Heart left ventricle (tissue), 16 donors: ENCODE measurements at regions of chr4 and their contacts with region 1.

Region 1: DNA sequence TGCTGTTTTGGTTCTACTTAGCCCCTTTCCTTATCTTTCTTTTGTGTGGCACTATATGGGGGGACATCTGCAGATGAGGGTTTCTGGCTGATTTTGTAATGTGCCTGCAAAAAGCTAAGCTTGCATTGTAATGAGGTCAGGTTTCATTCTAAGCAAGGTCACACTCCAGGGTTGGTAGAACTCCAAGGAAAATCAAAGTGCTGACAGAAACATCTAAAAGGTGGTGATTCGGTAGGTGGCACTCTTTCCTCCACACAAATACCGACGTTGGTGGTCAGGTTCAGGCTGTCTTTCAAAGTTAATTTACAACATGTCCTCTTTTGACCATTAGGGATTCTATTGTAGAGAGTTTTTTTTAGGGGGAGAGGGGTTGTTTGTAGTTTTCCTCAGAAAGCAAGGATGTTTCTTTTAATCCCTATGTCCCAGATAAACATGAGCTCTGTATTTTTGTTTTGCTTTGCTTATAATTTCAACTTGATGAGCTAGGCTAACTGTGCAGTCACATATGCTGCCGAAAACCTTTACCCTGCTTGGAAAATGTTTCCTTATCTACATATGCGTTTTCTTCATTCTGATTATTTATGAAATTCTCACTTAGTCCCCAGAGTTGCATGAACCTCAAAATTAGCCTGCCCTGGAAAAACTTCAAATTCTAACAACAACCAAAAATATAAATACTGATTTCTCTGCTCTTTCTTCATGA is 434.2 kb downstream of the PPARGC1A start:
- DNase-seq: peak in 3 of 5 donors; percentile 19 to 33 (median 32)
- ATAC-seq: peak; percentile 85 to 90 (median 88)
- H3K4me3 ChIP-seq: no peak overlapping the region
- H3K27ac ChIP-seq: peak overlapping the region in 6 of 12 donors; percentile 28 to 54 (median 44)
- H3K4me1 ChIP-seq: peaks cover 0 to 29% (median 1%) of the 10 kb centered on the region in 12 donors
- H3K27me3 ChIP-seq: no peaks in the 10 kb centered on the region
- CTCF ChIP-seq: peak in 6 of 12 donors; percentile 10 to 40 (median 30)
- POLR2A ChIP-seq: no peak

Region 2: DNA sequence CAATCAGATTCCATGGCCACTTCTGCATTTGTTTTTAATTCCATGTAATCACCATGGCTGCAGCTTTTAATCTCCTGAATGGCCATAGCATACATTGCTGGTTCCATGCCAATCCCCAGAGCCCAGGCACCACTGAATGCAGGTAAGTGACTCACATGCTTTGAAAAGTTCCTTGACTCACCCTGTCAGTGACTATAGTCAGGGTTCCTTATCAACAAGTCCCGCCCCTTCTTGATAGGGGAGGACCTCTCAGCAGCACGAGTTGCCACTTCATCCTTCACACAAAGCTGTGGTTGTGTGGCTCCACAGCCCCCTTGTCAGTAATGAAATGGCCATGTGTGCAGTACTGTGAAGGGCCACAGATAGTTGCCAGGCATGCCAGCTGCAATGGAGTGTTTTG is 82.3 kb before region 1 on chr4:
- intact Hi-C with region 1: loop called in 4 of 10 experiments (anchors 2 to 10 kb)
- DNase-seq: peak; percentile 56 to 79 (median 67)
- ATAC-seq: peak; percentile 92 to 94 (median 93)
- H3K4me3 ChIP-seq: no peak overlapping the region
- H3K27ac ChIP-seq: peak overlapping the region; percentile 2 to 86 (median 72)
- H3K4me1 ChIP-seq: peaks cover 0 to 39% (median 4%) of the 10 kb centered on the region in 12 donors
- H3K27me3 ChIP-seq: no peaks in the 10 kb centered on the region
- CTCF ChIP-seq: no peak
- POLR2A ChIP-seq: no peak